ENCODE measurements at regions of chr15 and their contacts with region 1.

Region 1: GRCh38 chr15:40782580-40783227 is 12.9 kb downstream of the C15orf62 start:
- DNase-seq: peak; percentile 46 to 64
- H3K4me3 ChIP-seq: no peak overlapping the region
- H3K27ac ChIP-seq: no peak overlapping the region
- H3K4me1 ChIP-seq: peaks cover 8 to 23% (median 13%) of the 10 kb centered on the region in 4 experiments; a peak in 6 of 7 replicates
- H3K27me3 ChIP-seq: no peaks in the 10 kb centered on the region
- CTCF ChIP-seq: peak; percentile 77 to 79 (median 79)
- EP300 ChIP-seq: no peak
- POLR2A ChIP-seq: no peak
- RAD21 ChIP-seq: peak; percentile 73 to 83

Region 2: GRCh38 chr15:40743921-40744814 is 38.5 kb before region 1 on chr15:
- CTCF ChIA-PET with region 1: interaction called, 63 read pairs
- POLR2A ChIA-PET with region 1: interaction called, 5 read pairs
- DNase-seq: no peak
- H3K4me3 ChIP-seq: no peak overlapping the region
- H3K27ac ChIP-seq: no peak overlapping the region
- H3K4me1 ChIP-seq: peaks cover 9 to 16% (median 10%) of the 10 kb centered on the region in 4 experiments
- H3K27me3 ChIP-seq: no peaks in the 10 kb centered on the region
- CTCF ChIP-seq: peak in 2 of 3 experiments; percentile 10 to 15; a peak in 2 of 4 replicates
- EP300 ChIP-seq: no peak
- POLR2A ChIP-seq: no peak
- RAD21 ChIP-seq: peak in 1 of 2 experiments; percentile 9; a peak in 1 of 4 replicates

Region 3: DNA sequence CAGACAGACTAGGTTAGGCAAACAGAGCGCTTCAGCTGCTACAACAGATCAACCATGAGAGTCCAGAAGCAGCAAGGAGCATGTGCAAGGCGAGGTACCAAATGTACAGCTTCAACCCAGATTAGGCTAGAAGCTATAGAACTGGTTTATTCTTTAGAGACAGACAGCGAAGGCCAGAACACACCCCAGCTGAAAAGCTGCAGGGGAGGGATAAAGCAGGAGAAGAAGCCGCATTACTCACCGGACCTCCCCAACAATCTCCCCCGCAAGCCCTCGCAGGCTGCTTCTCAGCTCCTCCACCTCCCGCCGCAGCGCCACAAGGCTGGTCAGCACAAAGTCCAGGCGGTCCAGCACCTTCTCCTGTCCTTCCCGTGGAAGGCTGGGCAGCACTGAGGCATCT is 31.0 kb before region 1 on chr15:
- CTCF ChIA-PET with region 1: interaction called, 63 read pairs
- POLR2A ChIA-PET with region 1: interaction called, 5 read pairs
- DNase-seq: no peak
- H3K4me3 ChIP-seq: no peak overlapping the region
- H3K27ac ChIP-seq: no peak overlapping the region
- H3K4me1 ChIP-seq: 0 out of 7 replicates have a peak, but pooled peaks cover 0 to 2% (median under 1%) of the 10 kb centered on the region in 4 experiments
- H3K27me3 ChIP-seq: no peaks in the 10 kb centered on the region
- CTCF ChIP-seq: no peak
- EP300 ChIP-seq: no peak
- POLR2A ChIP-seq: no peak
- RAD21 ChIP-seq: no peak

Region 4: DNA sequence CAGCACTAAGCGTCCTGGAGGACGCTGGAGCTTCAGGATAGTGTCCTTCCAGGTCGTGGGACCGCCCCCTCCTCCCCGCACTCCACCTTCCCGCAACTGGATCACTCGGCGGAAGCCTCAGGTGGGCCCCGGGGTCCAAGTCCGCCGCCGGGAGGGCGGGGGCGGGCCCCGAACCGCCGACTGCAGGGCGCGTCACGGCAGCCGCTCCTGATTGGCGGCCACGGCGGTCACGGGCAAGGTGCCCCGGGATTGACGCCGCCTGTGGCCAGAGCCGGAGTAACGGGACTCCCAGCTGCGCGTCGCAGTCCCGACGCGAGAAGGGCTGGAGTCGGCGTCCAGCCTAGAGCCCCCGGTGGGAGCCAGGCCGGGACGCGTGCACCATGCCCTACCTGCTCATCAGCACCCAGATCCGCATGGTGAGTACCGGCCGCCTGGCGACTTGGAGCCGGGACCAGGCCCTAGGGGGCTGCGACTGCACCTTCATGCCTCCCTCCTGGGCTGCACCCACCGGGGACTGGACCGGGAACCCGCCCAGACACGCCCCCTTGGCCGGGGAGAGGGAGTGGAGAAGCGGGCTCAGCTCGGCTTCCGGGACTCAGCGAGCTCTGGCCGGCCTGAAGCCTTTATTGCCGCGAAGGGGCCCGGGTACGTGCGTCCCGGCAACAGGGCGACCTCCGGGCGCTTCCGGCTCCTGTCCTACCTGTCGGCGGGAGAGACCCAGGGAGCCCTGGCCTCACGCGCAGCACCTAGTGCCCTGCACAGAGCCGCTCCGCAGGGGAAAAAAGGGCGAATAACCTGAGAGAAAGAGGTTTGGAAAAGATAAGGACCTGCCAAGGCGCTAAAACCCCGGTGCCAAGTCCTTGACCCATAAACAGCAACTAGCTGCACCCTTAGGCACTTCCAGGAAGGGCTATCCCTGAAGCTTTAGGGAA is 18.6 kb before region 1 on chr15 and contains the start of gene GCHFR:
- CTCF ChIA-PET with region 1: interaction called, 184 read pairs
- POLR2A ChIA-PET with region 1: interaction called, 11 read pairs
- DNase-seq: peak in 1 of 2 experiments; percentile 86
- H3K4me3 ChIP-seq: peak within 1 kb of the TSS; percentile 44 to 81 (median 74)
- H3K27ac ChIP-seq: no peak within 1 kb of the TSS
- H3K4me1 ChIP-seq: peaks cover 6 to 30% (median 19%) of the 10 kb centered on the region in 4 experiments
- H3K27me3 ChIP-seq: peaks cover 0 to 7% (median 3%) of the 10 kb centered on the region in 4 experiments; a peak in 5 of 7 replicates
- CTCF ChIP-seq: peak; percentile 26 to 30 (median 29)
- EP300 ChIP-seq: no peak
- POLR2A ChIP-seq: peak in 1 of 2 experiments; percentile 53; a peak in 1 of 3 replicates
- RAD21 ChIP-seq: no peak; a peak in 1 of 4 replicates
- total RNA-seq, gene GCHFR: 22.7 and 25.9 TPM in 2 replicates

Region 5: DNA sequence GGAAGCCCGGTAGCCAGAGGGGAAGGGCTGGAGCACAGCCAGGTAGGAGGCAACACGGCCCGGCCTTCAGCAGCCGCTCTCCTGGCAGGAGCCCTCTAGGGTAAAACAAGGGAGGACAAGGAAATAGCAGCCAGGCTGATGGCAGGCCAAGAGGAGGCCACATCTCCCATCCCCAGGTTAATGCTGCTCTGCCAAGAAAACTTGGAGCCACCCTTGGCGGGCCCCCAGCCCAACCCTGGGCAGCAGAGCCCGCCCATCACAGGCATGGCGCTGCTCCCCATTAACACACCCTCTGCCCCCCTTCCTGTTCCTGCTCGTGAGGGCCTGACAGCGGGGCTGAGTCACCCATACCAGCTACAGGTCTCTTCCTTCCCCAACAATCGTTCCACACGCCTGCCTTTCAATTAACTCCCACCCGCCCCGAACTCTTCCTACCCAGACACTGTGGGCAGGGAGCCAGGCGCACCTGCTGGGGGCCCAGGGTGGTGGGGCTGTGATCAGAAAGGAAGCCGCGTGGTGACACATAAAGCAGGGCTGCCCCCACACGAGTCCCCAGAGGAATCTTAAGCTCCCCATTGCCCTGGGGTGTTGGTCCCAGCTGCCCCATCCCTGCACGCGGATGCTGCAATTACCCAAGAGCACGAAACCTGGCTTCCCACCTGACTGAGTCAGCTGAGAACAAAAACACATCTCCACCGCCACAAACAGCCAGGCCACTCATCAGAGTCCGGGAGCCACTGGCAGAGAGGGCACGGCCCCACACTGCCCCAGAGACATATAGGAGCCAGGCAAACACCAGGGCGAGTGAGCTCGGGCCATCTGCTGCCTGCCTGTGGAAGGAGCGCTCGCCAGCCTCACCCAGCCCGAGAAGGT is 13.2 kb before region 1 on chr15 and contains the start of gene C15orf62:
- CTCF ChIA-PET with region 1: interaction called, 184 read pairs
- POLR2A ChIA-PET with region 1: interaction called, 11 read pairs
- DNase-seq: no peak
- H3K4me3 ChIP-seq: no peak within 1 kb of the TSS
- H3K27ac ChIP-seq: no peak within 1 kb of the TSS; the same call in 1 of the 2 replicates
- H3K4me1 ChIP-seq: peaks cover 5 to 27% (median 15%) of the 10 kb centered on the region in 4 experiments
- H3K27me3 ChIP-seq: no peaks in the 10 kb centered on the region
- CTCF ChIP-seq: no peak
- EP300 ChIP-seq: no peak
- POLR2A ChIP-seq: no peak; a peak in 1 of 3 replicates
- RAD21 ChIP-seq: no peak
- total RNA-seq, gene C15orf62: 0.56 and 0.57 TPM in 2 replicates

Region 6: DNA sequence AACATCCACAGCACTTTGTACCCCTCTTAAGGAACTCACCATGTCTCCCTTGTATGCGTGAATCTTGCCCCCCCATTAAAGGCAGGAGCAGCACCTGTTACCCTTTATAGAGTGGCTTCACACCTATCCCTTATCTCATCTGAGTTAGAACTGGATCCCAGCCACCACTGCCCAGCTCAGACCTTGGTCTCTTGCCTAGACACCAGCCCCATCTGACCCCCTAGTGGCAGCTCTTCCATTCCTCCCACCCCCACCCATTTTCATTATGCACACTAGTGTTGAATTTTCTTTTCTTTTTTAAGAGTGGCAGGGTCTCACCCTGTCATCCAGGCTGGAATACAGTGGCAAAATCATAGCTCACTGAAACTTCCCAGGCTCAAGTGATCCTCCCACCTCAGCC is 21.0 kb after region 1 on chr15:
- CTCF ChIA-PET with region 1: interaction called, 14 read pairs
- POLR2A ChIA-PET with region 1: interaction called, 7 read pairs
- DNase-seq: no peak
- H3K4me3 ChIP-seq: no peak overlapping the region
- H3K27ac ChIP-seq: no peak overlapping the region
- H3K4me1 ChIP-seq: peaks cover 4 to 14% (median 6%) of the 10 kb centered on the region in 4 experiments; a peak in 6 of 7 replicates
- H3K27me3 ChIP-seq: no peaks in the 10 kb centered on the region
- CTCF ChIP-seq: peak in 1 of 3 experiments; percentile 2; a peak in 1 of 4 replicates
- EP300 ChIP-seq: no peak
- POLR2A ChIP-seq: no peak
- RAD21 ChIP-seq: no peak

Region 7: GRCh38 chr15:40999190-40999589 is 216.5 kb after region 1 on chr15:
- CTCF ChIA-PET with region 1: no interaction called
- POLR2A ChIA-PET with region 1: no interaction called
- DNase-seq: no peak
- H3K4me3 ChIP-seq: no peak overlapping the region
- H3K27ac ChIP-seq: no peak overlapping the region
- H3K4me1 ChIP-seq: no peaks in the 10 kb centered on the region
- H3K27me3 ChIP-seq: no peaks in the 10 kb centered on the region
- CTCF ChIP-seq: no peak
- EP300 ChIP-seq: no peak
- POLR2A ChIP-seq: no peak
- RAD21 ChIP-seq: no peak

Region 8: GRCh38 chr15:41241221-41241964 is 458.7 kb after region 1 on chr15:
- CTCF ChIA-PET with region 1: no interaction called
- POLR2A ChIA-PET with region 1: no interaction called
- DNase-seq: no peak
- H3K4me3 ChIP-seq: no peak overlapping the region
- H3K27ac ChIP-seq: no peak overlapping the region
- H3K4me1 ChIP-seq: no peaks in the 10 kb centered on the region
- H3K27me3 ChIP-seq: no peaks in the 10 kb centered on the region
- CTCF ChIP-seq: no peak
- EP300 ChIP-seq: no peak
- POLR2A ChIP-seq: no peak
- RAD21 ChIP-seq: no peak

Region 9: DNA sequence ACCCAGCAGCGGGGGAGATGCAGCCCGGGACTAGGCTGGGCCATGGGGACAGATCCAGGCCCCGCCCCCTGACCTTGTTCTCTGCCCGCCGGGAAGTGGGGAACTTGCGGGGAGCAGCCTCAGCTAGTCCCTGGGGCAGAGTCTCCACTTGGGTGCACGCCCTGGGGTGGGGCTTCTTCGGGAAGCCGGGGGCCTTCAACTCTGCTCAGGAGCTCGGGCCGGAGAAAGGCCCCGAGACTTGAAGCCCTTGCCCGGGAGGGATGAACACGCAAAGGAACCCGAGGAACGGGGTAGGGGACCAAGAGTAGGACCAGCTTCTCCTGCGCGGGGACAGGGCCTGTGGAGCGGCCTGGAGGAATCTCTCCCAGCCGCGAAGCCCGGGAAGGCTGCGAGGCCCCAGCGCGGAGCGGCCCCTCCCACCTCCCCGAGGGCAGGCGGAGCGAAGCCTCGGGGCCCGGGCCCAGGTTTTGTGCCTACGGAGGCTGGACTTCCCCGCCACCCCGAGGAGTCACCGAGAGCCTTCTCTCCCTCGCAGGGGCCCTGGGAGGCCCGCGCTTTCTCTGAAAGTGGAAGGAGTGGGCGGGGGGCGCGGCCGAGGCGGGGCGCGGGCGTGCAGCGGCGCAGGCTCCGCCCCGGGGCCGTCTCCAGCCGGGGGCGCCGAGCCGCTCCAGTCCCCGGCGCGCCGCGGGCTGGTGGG is 710.6 kb after region 1 on chr15 and contains the start of gene ITPKA:
- CTCF ChIA-PET with region 1: no interaction called
- POLR2A ChIA-PET with region 1: no interaction called
- DNase-seq: peak in 1 of 2 experiments; percentile 85
- H3K4me3 ChIP-seq: peak within 1 kb of the TSS; percentile 42 to 78 (median 54)
- H3K27ac ChIP-seq: no peak within 1 kb of the TSS
- H3K4me1 ChIP-seq: peaks cover 0 to 15% (median 8%) of the 10 kb centered on the region in 4 experiments; a peak in 6 of 7 replicates
- H3K27me3 ChIP-seq: peaks cover 56 to 78% (median 75%) of the 10 kb centered on the region in 4 experiments
- CTCF ChIP-seq: no peak
- EP300 ChIP-seq: no peak
- POLR2A ChIP-seq: no peak
- RAD21 ChIP-seq: no peak
- total RNA-seq, gene ITPKA: 0.67 and 0.99 TPM in 2 replicates